Endothelial cell of umbilical vein (primary cell): ENCODE measurements at regions of chr16 and their contacts with region 1.

Region 1: DNA sequence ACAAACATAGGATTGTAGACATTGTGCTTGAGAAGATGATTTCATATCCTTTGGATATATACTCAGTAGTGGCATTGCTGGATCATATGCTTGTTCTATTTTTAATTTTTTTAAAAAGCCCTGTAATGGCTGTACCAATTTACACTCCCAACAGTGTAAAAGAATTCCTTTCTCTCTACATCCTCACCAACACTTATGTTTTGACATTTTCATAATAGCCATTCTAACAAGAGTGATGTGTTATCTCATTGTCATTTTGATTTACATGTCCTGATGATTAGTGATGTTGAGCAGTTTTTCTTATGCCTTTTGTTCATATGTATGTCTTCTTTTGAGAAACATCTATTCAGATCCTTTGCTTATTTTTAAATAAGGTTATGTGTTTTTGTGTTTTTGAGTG is 1039.2 kb upstream of the GOT2 start:
- DNase-seq: no peak
- H3K4me3 ChIP-seq: no peak overlapping the region
- H3K27ac ChIP-seq: no peak overlapping the region
- H3K4me1 ChIP-seq: no peaks in the 10 kb centered on the region
- H3K27me3 ChIP-seq: no peaks in the 10 kb centered on the region
- CTCF ChIP-seq: no peak
- POLR2A ChIP-seq: no peak

Region 2: DNA sequence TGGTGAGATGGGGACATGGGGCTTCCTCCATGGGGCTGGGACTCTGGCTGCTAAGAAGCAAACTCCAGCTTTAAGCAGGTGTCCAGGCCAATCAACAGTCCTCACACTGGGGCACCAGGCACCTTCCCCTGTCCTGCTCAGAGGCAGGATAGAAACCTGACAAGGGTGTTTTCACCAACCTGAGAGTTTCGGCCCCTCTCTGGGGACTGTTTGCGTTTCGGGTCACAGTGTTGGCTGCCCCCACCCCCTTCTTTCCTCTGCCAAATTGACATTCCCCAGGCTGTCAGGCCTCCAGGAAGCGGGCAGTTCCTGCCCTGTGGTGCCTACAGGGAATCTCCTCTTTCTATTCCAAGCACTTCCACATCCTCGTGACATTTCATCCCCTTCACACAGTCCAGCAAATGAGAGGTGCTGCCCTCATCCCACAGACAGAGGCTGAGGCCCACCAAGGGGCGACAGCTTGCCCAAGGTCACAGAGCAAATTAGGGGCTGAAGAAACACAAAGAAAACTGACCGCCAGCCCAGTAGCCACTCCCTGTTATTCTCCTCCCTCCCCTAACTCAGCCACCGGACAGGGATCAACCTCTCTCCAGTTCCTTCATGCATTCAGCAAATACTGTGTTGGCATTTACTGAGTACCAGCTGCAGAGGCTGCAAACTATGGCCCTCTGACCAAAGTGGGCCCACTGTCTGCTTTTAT is 1709.8 kb before region 1 on chr16:
- CTCF ChIA-PET with region 1: no interaction called
- POLR2A ChIA-PET with region 1: no interaction called
- dilution Hi-C with region 1: no loop called
- intact Hi-C with region 1: loop called (anchors 10 kb)
- DNase-seq: no peak
- H3K4me3 ChIP-seq: no peak overlapping the region
- H3K27ac ChIP-seq: no peak overlapping the region
- H3K4me1 ChIP-seq: peaks cover 4% of the 10 kb centered on the region
- H3K27me3 ChIP-seq: no peaks in the 10 kb centered on the region
- CTCF ChIP-seq: no peak
- POLR2A ChIP-seq: no peak

Region 3: GRCh38 chr16:59886021-59886420 is 112.7 kb after region 1 on chr16:
- CTCF ChIA-PET with region 1: no interaction called
- POLR2A ChIA-PET with region 1: no interaction called
- dilution Hi-C with region 1: no loop called
- intact Hi-C with region 1: no loop called
- DNase-seq: peak; percentile 3
- H3K4me3 ChIP-seq: no peak overlapping the region
- H3K27ac ChIP-seq: no peak overlapping the region
- H3K4me1 ChIP-seq: no peaks in the 10 kb centered on the region
- H3K27me3 ChIP-seq: no peaks in the 10 kb centered on the region
- CTCF ChIP-seq: no peak
- POLR2A ChIP-seq: no peak